Heart right ventricle (tissue), 16 donors: ENCODE measurements at regions of chr6 and their contacts with region 1.

Region 1: DNA sequence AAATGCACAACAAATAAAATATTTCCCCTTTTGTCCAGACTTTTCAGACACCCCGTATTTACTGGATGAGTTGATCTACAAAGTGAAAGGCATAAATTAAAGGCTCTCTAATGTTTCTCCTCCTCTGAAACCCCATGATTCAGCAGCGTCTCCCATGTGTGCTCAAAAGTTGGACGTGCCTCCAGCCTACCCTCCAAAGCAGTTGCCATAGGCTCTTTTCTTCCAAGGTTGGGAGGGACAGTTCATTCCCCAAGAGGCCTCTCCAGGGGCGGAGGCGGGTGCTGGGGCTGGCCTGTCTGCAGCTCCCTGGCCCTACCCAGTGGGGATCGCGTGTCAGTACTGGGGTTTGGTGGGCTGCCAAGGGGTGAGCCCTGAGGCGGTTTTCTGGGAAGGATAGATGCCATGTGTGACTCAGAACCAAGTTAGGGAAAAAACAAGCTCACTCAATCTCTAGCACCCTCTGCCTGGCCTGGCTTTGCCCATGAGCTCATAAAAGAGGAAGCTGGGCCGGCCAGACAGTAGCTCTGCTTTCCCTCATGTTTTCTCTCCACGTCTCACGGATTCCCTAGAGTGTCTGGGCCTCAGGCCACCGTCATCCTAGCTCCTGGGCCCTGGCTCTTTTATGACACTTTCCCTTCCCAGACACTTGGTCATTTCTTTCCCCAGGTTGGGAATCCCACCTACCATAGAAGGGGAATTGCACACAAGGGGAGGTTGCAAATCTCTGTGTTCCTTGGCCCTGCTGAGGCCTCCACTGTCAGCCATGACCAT is 8.0 kb upstream of the IER3 start:
- DNase-seq: peak; percentile 88 to 95
- ATAC-seq: peak; percentile 91 to 96 (median 94)
- H3K4me3 ChIP-seq: no peak overlapping the region
- H3K27ac ChIP-seq: peak overlapping the region; percentile 82 to 99 (median 94)
- H3K4me1 ChIP-seq: peaks cover 8 to 65% (median 41%) of the 10 kb centered on the region in 9 donors
- H3K27me3 ChIP-seq: no peaks in the 10 kb centered on the region
- CTCF ChIP-seq: peak in 3 of 9 donors; percentile 11 to 29 (median 21)

Region 2: GRCh38 chr6:30590994-30591393 is 161.3 kb before region 1 on chr6:
- intact Hi-C with region 1: no loop called
- DNase-seq: no peak
- ATAC-seq: peak in 1 of 8 donors; percentile 34
- H3K4me3 ChIP-seq: no peak overlapping the region
- H3K27ac ChIP-seq: no peak overlapping the region
- H3K4me1 ChIP-seq: no peaks in the 10 kb centered on the region
- H3K27me3 ChIP-seq: no peaks in the 10 kb centered on the region
- CTCF ChIP-seq: no peak

Region 3: GRCh38 chr6:30781743-30782424 is 29.5 kb after region 1 on chr6:
- intact Hi-C with region 1: loop called in 1 of 10 experiments (anchors 2 kb)
- DNase-seq: peak; percentile 93 to 97
- ATAC-seq: peak; percentile 89 to 92 (median 91)
- H3K4me3 ChIP-seq: peak overlapping the region in 6 of 10 donors; percentile 2 to 33 (median 20)
- H3K27ac ChIP-seq: peak overlapping the region; percentile 74 to 97 (median 94)
- H3K4me1 ChIP-seq: peaks cover 25 to 100% (median 51%) of the 10 kb centered on the region in 9 donors
- H3K27me3 ChIP-seq: no peaks in the 10 kb centered on the region
- CTCF ChIP-seq: no peak